ENCODE measurements at regions of chr1 and their contacts with region 1.

Region 1: DNA sequence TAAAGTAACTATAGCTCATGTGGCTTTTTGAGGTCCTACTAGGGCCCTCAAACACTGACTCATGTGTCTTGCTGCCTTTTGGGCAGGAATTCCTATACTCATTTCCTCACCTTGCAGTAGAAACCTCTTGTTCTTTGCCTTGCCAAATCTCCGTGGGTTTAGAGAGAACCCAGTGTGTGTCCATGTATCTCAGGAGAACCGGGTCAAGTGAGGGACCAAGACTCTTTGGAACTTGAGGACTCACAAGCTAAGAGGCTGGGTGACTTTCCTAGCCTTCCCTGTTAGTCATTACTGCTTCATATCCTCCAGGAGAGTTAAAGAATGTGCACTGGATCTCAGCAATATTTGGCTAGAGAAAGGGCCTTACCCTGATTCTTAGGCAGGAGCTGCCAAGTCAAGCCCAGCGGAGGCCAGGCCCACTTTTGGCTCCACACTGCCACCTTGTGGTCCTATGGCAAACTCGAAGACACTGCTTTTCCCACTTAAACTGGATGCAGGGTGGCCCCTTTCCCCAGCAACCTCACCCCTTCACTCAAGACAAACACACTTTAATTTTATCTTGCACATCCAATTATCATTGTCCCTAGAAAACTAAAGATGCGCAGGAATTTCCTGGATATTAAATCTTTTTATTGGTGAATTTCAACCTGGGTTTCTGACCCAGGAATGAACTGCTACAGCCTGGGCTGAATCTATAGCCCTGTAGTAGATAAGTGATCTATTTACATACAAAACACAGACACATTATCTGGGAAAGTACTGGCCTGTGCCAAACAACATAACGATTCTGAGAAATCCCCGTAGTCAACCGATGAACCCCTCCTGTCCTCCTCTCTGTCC is 10.6 kb downstream of the AVPR1B start:
- DNase-seq: peak; percentile 84
- H3K4me3 ChIP-seq: no peak overlapping the region
- H3K27ac ChIP-seq: no peak overlapping the region
- H3K4me1 ChIP-seq: no peaks in the 10 kb centered on the region
- H3K27me3 ChIP-seq: no peaks in the 10 kb centered on the region
- CTCF ChIP-seq: peak; percentile 90

Region 2: GRCh38 chr1:205791568-205792180 is 314.9 kb before region 1 on chr1:
- CTCF ChIA-PET with region 1: interaction called, 4 read pairs
- POLR2A ChIA-PET with region 1: no interaction called
- intact Hi-C with region 1: loop called (anchors 5 kb)
- DNase-seq: peak; percentile 55
- H3K4me3 ChIP-seq: no peak overlapping the region
- H3K27ac ChIP-seq: no peak overlapping the region
- H3K4me1 ChIP-seq: no peaks in the 10 kb centered on the region
- H3K27me3 ChIP-seq: no peaks in the 10 kb centered on the region
- CTCF ChIP-seq: peak; percentile 74

Region 3: DNA sequence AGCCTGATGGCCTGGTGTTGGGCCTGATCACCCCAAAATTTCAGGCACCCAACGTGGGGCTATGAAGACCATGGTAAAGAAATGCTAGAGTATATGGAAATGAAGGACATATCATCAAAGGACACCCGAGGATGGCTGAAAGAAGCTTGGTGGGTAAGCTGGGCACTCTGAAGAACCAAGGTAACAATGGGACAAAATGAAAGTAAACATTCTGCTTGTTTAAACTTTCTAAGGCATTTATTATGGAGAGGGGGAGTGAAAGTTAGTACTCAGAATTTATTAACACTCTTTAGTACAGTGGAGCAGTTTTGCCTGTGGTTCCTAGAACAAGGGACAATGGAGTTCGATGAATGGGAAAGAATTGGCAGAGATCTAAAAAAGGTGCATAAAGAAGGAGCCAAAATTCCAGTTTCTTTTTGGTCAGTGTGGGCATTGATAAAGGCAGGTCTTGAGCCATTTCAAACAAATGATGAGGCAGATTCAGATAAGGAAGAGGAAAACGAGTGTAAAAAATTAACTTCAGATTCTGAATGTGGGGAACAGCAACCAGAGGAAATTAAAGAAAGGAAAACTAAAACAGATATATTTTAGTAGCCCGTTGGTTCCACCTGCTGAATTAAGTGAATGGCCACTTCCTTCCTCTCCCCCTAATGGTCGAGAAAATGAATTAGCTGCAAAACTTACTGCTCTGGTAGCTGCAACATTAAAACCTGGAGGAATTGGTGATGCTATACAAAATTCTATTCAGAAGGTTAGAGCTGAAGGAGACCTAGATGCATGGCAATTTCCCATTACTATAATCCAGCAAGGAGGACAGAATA is 248.2 kb before region 1 on chr1:
- CTCF ChIA-PET with region 1: no interaction called
- POLR2A ChIA-PET with region 1: no interaction called
- intact Hi-C with region 1: no loop called
- DNase-seq: no peak
- H3K4me3 ChIP-seq: no peak overlapping the region
- H3K27ac ChIP-seq: no peak overlapping the region
- H3K4me1 ChIP-seq: no peaks in the 10 kb centered on the region
- H3K27me3 ChIP-seq: peaks cover 32% of the 10 kb centered on the region
- CTCF ChIP-seq: no peak

Region 4: GRCh38 chr1:205919026-205919746 is 187.4 kb before region 1 on chr1:
- CTCF ChIA-PET with region 1: interaction called, 3 read pairs
- POLR2A ChIA-PET with region 1: no interaction called
- intact Hi-C with region 1: loop called (anchors 1 kb)
- DNase-seq: peak; percentile 80
- H3K4me3 ChIP-seq: no peak overlapping the region
- H3K27ac ChIP-seq: no peak overlapping the region
- H3K4me1 ChIP-seq: no peaks in the 10 kb centered on the region
- H3K27me3 ChIP-seq: no peaks in the 10 kb centered on the region
- CTCF ChIP-seq: peak; percentile 85

Region 5: GRCh38 chr1:205977402-205978014 is 129.0 kb before region 1 on chr1:
- CTCF ChIA-PET with region 1: interaction called, 47 read pairs
- POLR2A ChIA-PET with region 1: no interaction called
- intact Hi-C with region 1: no loop called
- DNase-seq: peak; percentile 80
- H3K4me3 ChIP-seq: no peak overlapping the region
- H3K27ac ChIP-seq: no peak overlapping the region
- H3K4me1 ChIP-seq: no peaks in the 10 kb centered on the region
- H3K27me3 ChIP-seq: no peaks in the 10 kb centered on the region
- CTCF ChIP-seq: peak; percentile 98

Region 6: DNA sequence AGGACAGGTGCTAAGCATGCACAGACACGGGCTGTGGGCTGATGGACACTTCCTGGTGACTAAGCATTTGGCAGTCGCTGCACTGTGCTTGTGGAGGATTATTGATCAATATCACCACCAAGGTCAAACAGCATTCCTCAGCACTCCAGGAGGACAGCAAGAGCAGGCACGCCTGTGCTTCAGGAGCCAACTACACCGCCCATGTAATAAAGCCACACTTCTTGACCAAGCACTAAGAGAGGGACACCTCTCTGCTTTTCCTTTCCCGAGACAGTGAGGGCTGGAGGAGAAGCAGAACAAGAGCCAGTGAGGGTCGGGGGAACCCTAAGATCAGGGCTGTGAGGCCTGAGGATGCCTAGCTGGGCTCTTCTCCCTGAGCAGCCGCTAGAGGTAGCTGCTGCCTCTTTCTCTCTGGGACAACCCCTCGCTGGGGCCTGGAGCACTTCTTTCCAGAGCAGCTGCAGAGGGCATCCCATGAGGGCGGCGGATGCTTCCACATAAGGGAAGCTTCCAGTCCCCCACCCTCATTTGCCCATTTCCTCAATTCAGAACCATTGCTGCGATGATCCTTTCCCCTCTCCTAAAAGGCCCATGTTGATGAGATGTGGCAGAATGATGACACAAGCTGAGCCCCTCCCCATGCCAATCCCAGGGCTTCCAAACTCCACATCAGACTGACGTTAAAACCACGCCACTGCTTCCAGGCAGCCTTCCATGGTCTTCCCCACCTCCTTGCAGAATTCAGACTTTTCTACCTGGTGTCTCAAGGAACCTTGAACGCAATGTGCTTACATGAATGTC is 122.4 kb before region 1 on chr1:
- CTCF ChIA-PET with region 1: interaction called, 47 read pairs
- POLR2A ChIA-PET with region 1: no interaction called
- intact Hi-C with region 1: loop called (anchors 1 kb)
- DNase-seq: peak; percentile 71
- H3K4me3 ChIP-seq: no peak overlapping the region
- H3K27ac ChIP-seq: no peak overlapping the region
- H3K4me1 ChIP-seq: no peaks in the 10 kb centered on the region
- H3K27me3 ChIP-seq: no peaks in the 10 kb centered on the region
- CTCF ChIP-seq: peak; percentile 75

Region 7: GRCh38 chr1:206030714-206031113 is 75.8 kb before region 1 on chr1:
- CTCF ChIA-PET with region 1: interaction called, 11 read pairs
- POLR2A ChIA-PET with region 1: no interaction called
- intact Hi-C with region 1: loop called (anchors 2 kb)
- DNase-seq: peak; percentile 78
- H3K4me3 ChIP-seq: no peak overlapping the region
- H3K27ac ChIP-seq: no peak overlapping the region
- H3K4me1 ChIP-seq: no peaks in the 10 kb centered on the region
- H3K27me3 ChIP-seq: no peaks in the 10 kb centered on the region
- CTCF ChIP-seq: peak; percentile 95

Measured in A673 (cell line).